ENCODE measurements at regions of chr7 and their contacts with region 1.

Region 1: DNA sequence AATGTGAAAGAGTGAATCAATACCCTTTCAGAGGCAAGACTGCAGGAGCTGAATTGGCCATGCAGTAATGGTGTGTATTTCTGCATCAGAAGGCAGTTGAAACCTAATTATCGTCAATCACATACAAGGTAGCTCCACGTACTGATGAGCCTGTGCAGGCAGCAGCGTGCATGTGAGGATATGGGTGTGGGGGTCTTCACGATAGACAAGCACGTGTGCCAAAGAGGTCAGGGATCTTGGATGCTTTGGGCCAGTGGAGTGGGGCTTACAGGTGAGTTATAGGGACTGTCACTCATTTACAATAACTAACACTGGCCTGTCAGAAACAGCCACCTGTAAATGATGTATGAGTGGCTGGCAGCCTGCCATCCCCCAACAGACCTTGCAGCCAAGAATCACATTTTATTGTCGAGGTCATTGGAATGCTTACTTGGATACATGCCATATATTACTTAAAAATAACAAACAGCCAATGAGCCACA is 210.9 kb downstream of the SKAP2 start:
- DNase-seq: no peak
- ATAC-seq: no peak
- H3K4me3 ChIP-seq: no peak overlapping the region
- H3K27ac ChIP-seq: no peak overlapping the region
- H3K4me1 ChIP-seq: no peaks in the 10 kb centered on the region
- H3K27me3 ChIP-seq: no peaks in the 10 kb centered on the region

Region 2: DNA sequence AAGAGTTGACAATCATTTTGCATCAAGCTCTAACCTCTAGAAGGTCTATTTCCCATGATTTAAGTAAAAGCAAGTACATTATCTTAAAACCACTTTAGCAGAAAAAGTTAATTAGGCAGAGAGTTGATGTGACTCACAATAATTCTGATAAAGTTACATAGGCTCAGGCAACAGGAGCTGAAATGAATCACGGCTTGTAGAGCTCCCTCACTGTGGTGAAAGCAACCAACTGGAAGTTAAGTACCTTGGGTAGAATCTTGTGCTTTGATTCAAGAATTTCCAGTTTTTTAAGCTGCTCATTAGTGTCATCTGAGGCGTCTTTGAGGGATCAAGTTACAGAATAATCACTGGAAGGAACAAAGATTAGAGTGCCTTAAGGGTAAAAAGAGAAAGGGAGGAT is 570.4 kb before region 1 on chr7:
- intact Hi-C with region 1: loop called in 1 of 2 experiments (anchors 10 kb)
- DNase-seq: no peak
- ATAC-seq: no peak
- H3K4me3 ChIP-seq: no peak overlapping the region
- H3K27ac ChIP-seq: no peak overlapping the region
- H3K4me1 ChIP-seq: no peaks in the 10 kb centered on the region
- H3K27me3 ChIP-seq: no peaks in the 10 kb centered on the region